ENCODE measurements at regions of chr17 and their contacts with region 1.

Region 1: GRCh38 chr17:78865682-78866390 is 25.2 kb upstream of the USP36 start:
- DNase-seq: peak; percentile 70
- H3K4me3 Mint-ChIP-seq: no peak overlapping the region
- H3K27ac Mint-ChIP-seq: no peak overlapping the region
- H3K4me1 Mint-ChIP-seq: peaks cover 3% of the 10 kb centered on the region
- H3K27me3 Mint-ChIP-seq: peaks cover 15% of the 10 kb centered on the region

Region 2: DNA sequence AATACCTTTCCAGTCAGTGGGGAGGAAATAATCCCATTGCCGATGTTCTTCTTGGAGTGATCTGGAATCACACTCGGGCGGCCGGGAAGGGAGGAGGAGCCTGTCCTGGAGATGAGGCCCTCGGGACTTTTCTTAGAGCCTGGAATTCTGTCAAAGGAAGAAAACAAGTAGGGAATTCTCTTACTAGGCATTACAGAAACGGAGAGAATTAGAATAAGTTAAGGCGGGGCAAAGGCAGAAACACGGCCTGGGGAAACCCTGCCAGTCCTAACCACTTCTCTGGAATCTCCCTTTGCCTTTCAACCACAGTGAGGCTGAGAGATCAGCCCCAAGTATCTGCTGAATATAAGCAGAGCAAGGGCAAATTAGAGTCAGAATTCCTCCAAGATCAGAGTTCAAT is 53.0 kb before region 1 on chr17:
- CTCF ChIA-PET with region 1: no interaction called
- POLR2A ChIA-PET with region 1: no interaction called
- DNase-seq: no peak
- H3K4me3 Mint-ChIP-seq: no peak overlapping the region
- H3K27ac Mint-ChIP-seq: peak overlapping the region; percentile 55
- H3K4me1 Mint-ChIP-seq: peaks cover 40% of the 10 kb centered on the region
- H3K27me3 Mint-ChIP-seq: no peaks in the 10 kb centered on the region

Region 3: GRCh38 chr17:78852709-78853121 is 13.1 kb before region 1 on chr17:
- CTCF ChIA-PET with region 1: interaction called, 22 read pairs
- POLR2A ChIA-PET with region 1: no interaction called
- DNase-seq: no peak
- H3K4me3 Mint-ChIP-seq: no peak overlapping the region
- H3K27ac Mint-ChIP-seq: no peak overlapping the region
- H3K4me1 Mint-ChIP-seq: no peaks in the 10 kb centered on the region
- H3K27me3 Mint-ChIP-seq: peaks cover 1% of the 10 kb centered on the region

Region 4: DNA sequence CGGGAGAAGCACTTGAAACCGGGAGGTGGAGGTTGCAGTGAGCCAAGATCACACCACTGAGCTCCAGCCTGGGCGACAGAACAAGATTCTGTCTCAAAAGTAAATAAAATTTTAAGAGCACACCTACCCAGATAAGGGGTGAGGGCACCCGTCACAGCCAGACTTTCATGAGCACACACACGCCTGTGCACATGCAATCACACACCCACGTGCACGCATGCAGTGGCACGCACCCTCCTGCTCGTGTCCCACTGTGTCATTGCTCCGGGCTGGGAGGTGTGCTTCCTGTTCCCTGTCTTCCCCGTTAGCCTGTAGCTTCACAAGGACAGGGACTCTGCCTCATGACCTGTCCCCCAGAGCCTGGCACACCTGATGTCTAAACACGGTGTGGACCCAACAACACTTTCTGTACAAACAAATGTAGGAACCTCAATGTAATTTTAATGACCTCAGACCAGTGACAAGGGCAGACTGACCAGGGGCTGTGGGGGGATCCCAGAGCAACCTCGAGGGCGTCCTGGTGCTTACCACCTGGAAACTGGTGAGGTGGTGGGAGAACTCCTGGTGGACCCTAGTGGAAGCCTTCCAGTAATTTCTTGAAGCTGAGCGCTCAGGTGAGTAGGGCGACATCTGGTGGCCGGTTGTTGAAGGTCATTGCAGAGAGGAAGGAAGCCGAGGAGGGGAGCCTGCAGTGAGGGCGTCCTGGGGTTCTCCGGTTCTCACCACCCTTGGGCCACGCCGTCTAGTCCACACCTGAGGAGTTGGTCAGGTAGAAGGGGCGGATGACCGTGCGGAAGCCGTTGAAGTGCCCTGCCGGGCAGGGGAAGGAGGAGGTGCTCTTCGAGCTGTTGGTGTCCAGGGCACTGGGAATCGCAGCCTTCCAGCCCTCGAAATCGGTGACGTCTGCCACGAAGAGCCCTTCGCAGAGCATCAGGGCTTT is 105.3 kb after region 1 on chr17:
- CTCF ChIA-PET with region 1: interaction called, 42 read pairs
- POLR2A ChIA-PET with region 1: interaction called, 6 read pairs
- DNase-seq: peak; percentile 80
- H3K4me3 Mint-ChIP-seq: no peak overlapping the region
- H3K27ac Mint-ChIP-seq: peak overlapping the region; percentile 48
- H3K4me1 Mint-ChIP-seq: peaks cover 10% of the 10 kb centered on the region
- H3K27me3 Mint-ChIP-seq: no peaks in the 10 kb centered on the region